Activated CD4-positive, alpha-beta T cell treated with anti-CD3 and anti-CD28 coated beads for 36 hours (primary cell): ENCODE measurements at regions of chr2 and their contacts with region 1.

Region 1: DNA sequence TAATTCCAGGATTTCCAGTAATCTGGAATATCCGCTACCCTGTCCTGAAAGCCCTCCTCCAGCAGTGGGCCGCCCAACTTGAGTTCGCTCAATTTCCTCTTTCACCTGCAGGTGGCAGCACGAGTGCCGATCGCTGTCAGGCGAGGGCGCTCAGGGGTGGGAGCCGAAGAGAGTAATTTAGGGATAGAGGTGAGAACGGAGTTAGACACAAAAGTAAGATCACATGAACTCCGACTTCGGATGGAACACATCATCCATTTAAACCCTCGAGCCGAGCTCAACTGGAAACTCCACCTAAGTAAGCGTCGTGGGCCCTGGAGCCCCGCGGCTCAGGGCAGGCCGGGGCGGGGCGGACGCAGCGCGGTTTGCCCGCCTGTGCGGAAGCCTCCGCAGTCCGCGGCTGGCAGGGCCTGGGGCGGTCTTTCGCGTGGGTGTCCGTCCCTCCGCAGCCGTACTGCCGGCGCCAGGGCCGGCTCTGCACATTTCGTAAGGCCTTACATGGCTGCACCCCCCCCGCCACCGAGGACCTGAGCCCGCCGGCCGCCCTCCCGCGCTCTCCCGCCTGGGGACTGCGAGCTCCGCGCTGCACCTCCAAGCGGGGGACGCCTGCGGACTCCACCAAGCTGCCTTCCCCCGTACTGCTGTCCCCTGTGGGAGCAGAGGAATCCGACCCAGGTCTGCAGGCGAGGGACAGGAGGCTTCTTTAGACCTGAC is 61.2 kb downstream of the SEMA4F start:
- DNase-seq: peak; percentile 90
- ATAC-seq: peak; percentile 91
- H3K4me3 Mint-ChIP-seq: peak overlapping the region; percentile 77
- H3K27ac Mint-ChIP-seq: peak overlapping the region; percentile 45
- H3K4me1 Mint-ChIP-seq: peaks cover 7% of the 10 kb centered on the region
- H3K27me3 Mint-ChIP-seq: peaks cover 11% of the 10 kb centered on the region

Region 2: GRCh38 chr2:74690571-74690970 is 24.7 kb before region 1 on chr2:
- CTCF ChIA-PET with region 1: no interaction called
- POLR2A ChIA-PET with region 1: no interaction called
- intact Hi-C with region 1: no loop called
- DNase-seq: peak; percentile 27
- ATAC-seq: peak; percentile 77
- H3K4me3 Mint-ChIP-seq: no peak overlapping the region
- H3K27ac Mint-ChIP-seq: no peak overlapping the region
- H3K4me1 Mint-ChIP-seq: no peaks in the 10 kb centered on the region
- H3K27me3 Mint-ChIP-seq: no peaks in the 10 kb centered on the region

Region 3: GRCh38 chr2:74759986-74760385 is 44.8 kb after region 1 on chr2:
- CTCF ChIA-PET with region 1: interaction called, 3 read pairs
- POLR2A ChIA-PET with region 1: no interaction called
- intact Hi-C with region 1: loop called in 1 of 2 experiments (anchors 1 kb)
- DNase-seq: no peak
- ATAC-seq: no peak
- H3K4me3 Mint-ChIP-seq: no peak overlapping the region
- H3K27ac Mint-ChIP-seq: no peak overlapping the region
- H3K4me1 Mint-ChIP-seq: peaks cover 4% of the 10 kb centered on the region
- H3K27me3 Mint-ChIP-seq: peaks cover 2% of the 10 kb centered on the region

Region 4: DNA sequence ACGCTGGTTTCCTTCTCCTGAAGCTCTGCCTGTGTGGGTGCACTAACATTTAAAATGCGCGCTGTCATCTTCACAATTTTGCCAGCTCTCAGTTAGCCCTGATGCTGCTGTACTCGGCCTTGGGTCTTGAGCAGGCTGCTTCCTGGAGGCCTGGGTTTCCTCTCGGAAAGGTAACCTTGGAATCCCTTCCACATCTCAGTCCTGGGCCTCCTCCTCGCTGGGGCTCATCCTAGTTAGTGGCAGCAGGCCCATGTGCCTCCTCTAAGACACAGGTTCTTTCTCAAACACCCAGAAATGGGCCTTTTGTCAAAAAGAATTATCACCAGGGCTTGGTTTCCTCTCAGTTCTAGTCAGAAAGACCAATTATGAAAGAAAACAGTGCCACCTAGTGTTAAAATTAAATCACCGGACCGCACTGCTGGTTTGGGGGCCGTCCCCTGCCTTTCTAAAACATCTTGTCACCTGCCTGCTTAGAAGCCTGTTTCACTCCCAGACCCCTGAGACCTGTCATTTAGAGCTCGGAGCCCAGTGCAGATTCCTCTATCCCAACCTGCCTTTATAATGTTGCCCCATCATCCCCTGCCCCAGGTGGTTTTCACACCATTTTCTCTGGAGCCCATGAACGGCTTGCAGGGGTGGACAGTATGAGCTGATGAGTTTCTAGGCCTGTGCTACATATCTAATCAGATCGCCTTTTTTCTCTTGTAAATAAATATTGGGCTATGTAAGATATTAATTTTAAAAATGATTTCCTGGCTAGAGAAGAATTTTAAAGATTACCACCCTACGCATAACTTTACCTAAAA is 161.0 kb after region 1 on chr2:
- CTCF ChIA-PET with region 1: interaction called, 58 read pairs
- POLR2A ChIA-PET with region 1: no interaction called
- intact Hi-C with region 1: loop called (anchors 1 kb)
- DNase-seq: peak; percentile 54
- ATAC-seq: peak; percentile 91
- H3K4me3 Mint-ChIP-seq: no peak overlapping the region
- H3K27ac Mint-ChIP-seq: peak overlapping the region; percentile 21
- H3K4me1 Mint-ChIP-seq: no peaks in the 10 kb centered on the region
- H3K27me3 Mint-ChIP-seq: no peaks in the 10 kb centered on the region